Esophagus muscularis mucosa (tissue), 4 donors: ENCODE measurements at regions of chr14 and their contacts with region 1.

Region 1: GRCh38 chr14:105562713-105563346 is 36.4 kb downstream of the TMEM121 start:
- DNase-seq: no peak
- H3K4me3 ChIP-seq: no peak overlapping the region
- H3K27ac ChIP-seq: no peak overlapping the region
- H3K4me1 ChIP-seq: peaks cover 0 to 5% (median 2%) of the 10 kb centered on the region in 4 donors
- H3K27me3 ChIP-seq: peaks cover 0 to 10% (median 0%) of the 10 kb centered on the region in 4 donors
- CTCF ChIP-seq: no peak
- EP300 ChIP-seq: no peak
- POLR2A ChIP-seq: no peak

Region 2: GRCh38 chr14:105682940-105683570 is 120.2 kb after region 1 on chr14:
- intact Hi-C with region 1: loop called (anchors 10 kb)
- DNase-seq: no peak
- H3K4me3 ChIP-seq: no peak overlapping the region
- H3K27ac ChIP-seq: no peak overlapping the region
- H3K4me1 ChIP-seq: peaks cover 0 to 4% (median 2%) of the 10 kb centered on the region in 4 donors
- H3K27me3 ChIP-seq: peaks cover 0 to 4% (median 0%) of the 10 kb centered on the region in 4 donors
- CTCF ChIP-seq: no peak
- EP300 ChIP-seq: no peak
- POLR2A ChIP-seq: no peak

Region 3: DNA sequence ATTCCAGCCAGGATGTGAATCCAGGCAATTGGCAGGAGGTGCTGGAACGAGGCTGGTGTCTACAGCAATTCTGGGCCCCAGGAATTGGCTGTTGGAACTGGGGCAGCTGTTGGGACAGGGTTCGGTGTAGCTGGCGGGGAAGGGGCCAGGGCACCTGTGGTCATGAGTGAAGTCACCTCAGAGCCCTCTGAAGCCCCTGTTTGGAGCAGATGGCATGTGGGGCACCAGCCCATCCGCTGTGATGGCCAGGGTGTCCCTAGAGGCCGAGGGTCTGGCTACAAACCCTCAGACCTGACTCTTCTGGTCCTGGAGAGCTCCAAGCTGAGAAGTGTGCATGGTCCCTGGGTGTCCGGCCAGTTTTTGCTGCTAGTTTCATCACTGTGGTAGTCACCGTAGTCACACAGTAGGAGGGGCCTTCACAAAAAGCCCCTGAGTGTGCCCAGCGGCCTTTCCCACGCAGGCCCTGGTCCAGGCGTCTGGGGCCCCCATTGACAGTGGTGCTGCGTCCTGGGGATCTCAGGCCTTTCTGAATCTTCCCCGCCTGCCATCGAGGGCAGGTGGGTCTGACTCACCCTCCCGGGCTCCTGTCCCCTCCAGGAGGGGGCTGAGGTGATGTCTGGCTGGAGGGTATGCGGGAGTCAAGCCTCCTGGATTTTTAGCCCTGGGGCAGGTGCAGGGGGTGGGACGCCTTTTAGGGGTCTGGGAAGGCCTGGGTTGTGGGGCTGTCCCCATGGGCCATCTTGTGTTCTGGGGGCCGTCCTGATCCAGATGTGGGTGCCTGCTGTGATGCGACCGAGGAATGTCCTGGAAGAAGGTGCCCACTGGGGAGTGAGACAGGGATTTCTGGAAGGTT is 331.5 kb after region 1 on chr14:
- intact Hi-C with region 1: no loop called
- DNase-seq: no peak
- H3K4me3 ChIP-seq: no peak overlapping the region
- H3K27ac ChIP-seq: no peak overlapping the region
- H3K4me1 ChIP-seq: no peaks in the 10 kb centered on the region
- H3K27me3 ChIP-seq: peaks cover 0 to 15% (median 0%) of the 10 kb centered on the region in 4 donors
- CTCF ChIP-seq: no peak
- EP300 ChIP-seq: no peak
- POLR2A ChIP-seq: no peak